Endothelial cell of umbilical vein (primary cell): ENCODE measurements at regions of chr12 and their contacts with region 1.

Region 1: GRCh38 chr12:39595923-39596322 is 23.7 kb downstream of the ABCD2 start:
- DNase-seq: no peak
- H3K4me3 ChIP-seq: no peak overlapping the region
- H3K27ac ChIP-seq: no peak overlapping the region
- H3K4me1 ChIP-seq: no peaks in the 10 kb centered on the region
- H3K27me3 ChIP-seq: peaks cover 0 to 2% of the 10 kb centered on the region in 2 experiments
- CTCF ChIP-seq: no peak
- POLR2A ChIP-seq: no peak

Region 2: GRCh38 chr12:39553471-39553870 is 42.5 kb before region 1 on chr12:
- CTCF ChIA-PET with region 1: no interaction called
- POLR2A ChIA-PET with region 1: no interaction called
- dilution Hi-C with region 1: no loop called
- intact Hi-C with region 1: loop called (anchors 5 kb)
- DNase-seq: no peak
- H3K4me3 ChIP-seq: no peak overlapping the region
- H3K27ac ChIP-seq: no peak overlapping the region
- H3K4me1 ChIP-seq: no peaks in the 10 kb centered on the region
- H3K27me3 ChIP-seq: no peaks in the 10 kb centered on the region
- CTCF ChIP-seq: no peak
- POLR2A ChIP-seq: no peak

Region 3: GRCh38 chr12:39571351-39571750 is 24.6 kb before region 1 on chr12:
- CTCF ChIA-PET with region 1: no interaction called
- POLR2A ChIA-PET with region 1: no interaction called
- dilution Hi-C with region 1: no loop called
- intact Hi-C with region 1: no loop called
- DNase-seq: no peak
- H3K4me3 ChIP-seq: no peak overlapping the region
- H3K27ac ChIP-seq: no peak overlapping the region
- H3K4me1 ChIP-seq: no peaks in the 10 kb centered on the region
- H3K27me3 ChIP-seq: no peaks in the 10 kb centered on the region
- CTCF ChIP-seq: no peak
- POLR2A ChIP-seq: no peak